ENCODE measurements at regions of chr9 and their contacts with region 1.

Region 1: DNA sequence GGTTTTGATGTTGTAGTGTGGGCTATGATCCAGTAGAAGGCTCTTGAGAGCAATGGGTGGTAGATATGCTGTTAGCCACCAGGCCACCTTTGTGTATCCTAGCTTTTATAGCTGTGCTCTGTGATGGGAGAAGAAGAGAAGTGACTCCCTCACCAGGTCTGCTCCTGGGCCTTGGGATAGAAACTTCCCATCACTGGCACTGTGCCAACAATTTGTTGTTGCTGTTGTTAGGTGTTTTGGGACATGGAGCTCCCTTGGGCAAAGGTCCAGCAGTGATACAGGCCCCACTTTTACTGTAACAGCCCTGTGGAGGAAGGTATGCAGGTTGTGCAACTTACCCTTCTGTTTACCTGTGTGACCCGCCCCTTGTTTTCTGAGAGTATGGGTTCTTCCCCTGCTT is 570.9 kb upstream of the GRIN3A start:
- DNase-seq: no peak
- H3K4me3 ChIP-seq: no peak overlapping the region
- H3K27ac ChIP-seq: no peak overlapping the region
- H3K4me1 ChIP-seq: no peaks in the 10 kb centered on the region
- H3K27me3 ChIP-seq: no peaks in the 10 kb centered on the region
- CTCF ChIP-seq: no peak
- POLR2A ChIP-seq: no peak

Region 2: DNA sequence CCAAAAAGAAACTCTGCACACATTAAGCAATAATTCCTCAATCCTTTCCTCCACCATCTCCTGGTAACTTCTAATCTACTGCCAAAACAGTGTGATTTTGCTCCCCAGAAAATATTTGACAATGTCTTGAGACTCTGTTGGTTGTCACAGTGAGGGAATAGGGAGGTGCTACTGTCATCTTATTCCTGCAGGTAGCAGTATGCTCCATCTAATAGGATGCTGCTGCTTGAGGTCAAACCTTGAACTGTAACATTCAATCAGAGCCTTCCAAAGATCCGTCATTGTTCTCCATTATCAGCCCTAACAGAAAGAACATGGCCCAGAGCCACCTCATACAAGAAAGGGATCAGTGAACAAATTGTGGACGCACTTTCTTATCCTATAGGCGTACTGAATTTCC is 56.3 kb before region 1 on chr9:
- intact Hi-C with region 1: loop called (anchors 10 kb)
- DNase-seq: no peak
- H3K4me3 ChIP-seq: no peak overlapping the region
- H3K27ac ChIP-seq: no peak overlapping the region
- H3K4me1 ChIP-seq: no peaks in the 10 kb centered on the region
- H3K27me3 ChIP-seq: no peaks in the 10 kb centered on the region
- CTCF ChIP-seq: no peak
- POLR2A ChIP-seq: no peak

Region 3: GRCh38 chr9:102273952-102274351 is 35.4 kb before region 1 on chr9:
- intact Hi-C with region 1: no loop called
- DNase-seq: no peak
- H3K4me3 ChIP-seq: no peak overlapping the region
- H3K27ac ChIP-seq: no peak overlapping the region
- H3K4me1 ChIP-seq: no peaks in the 10 kb centered on the region
- H3K27me3 ChIP-seq: no peaks in the 10 kb centered on the region
- CTCF ChIP-seq: no peak
- POLR2A ChIP-seq: no peak

Region 4: GRCh38 chr9:103037508-103038477 is 728.4 kb after region 1 on chr9:
- intact Hi-C with region 1: no loop called
- DNase-seq: no peak
- H3K4me3 ChIP-seq: no peak overlapping the region
- H3K27ac ChIP-seq: no peak overlapping the region
- H3K4me1 ChIP-seq: no peaks in the 10 kb centered on the region
- H3K27me3 ChIP-seq: no peaks in the 10 kb centered on the region
- CTCF ChIP-seq: no peak
- POLR2A ChIP-seq: no peak

Measured in thyroid gland (tissue), 4 donors.